ENCODE measurements at regions of chr15 and their contacts with region 1.

Region 1: GRCh38 chr15:25933456-25934158 is 70.5 kb upstream of the ATP10A start:
- DNase-seq: peak; percentile 57
- H3K4me3 ChIP-seq: peak overlapping the region; percentile 42
- CTCF ChIP-seq: peak; percentile 84

Region 2: DNA sequence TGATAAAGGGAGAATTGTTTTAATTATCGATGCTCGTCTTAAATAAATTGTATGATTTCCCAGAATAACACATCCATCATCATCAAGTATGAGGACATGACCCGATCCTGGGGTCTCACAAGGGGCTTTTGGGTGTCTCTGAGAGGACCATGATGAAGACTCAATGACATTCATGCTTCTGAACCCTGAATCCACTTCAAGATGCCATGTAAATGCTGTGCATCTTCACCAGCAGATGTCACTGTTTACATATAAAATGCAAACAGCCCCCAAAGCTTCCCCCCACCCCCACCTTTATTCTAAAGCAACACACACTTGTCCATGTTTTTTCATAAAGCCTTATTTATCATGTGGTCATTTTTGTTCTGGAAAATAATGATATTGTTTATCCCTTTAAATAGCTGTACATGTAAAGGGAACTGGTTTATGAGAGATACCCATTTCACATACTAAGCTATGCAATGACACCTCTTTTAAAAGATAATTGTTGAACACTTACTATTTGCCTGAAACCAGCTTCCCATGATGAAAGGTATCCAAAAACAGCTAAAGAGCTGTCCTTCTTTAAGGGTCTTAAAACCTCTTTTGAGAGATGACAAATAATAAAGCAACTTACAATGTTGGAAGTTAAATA is 425.1 kb before region 1 on chr15:
- CTCF ChIA-PET with region 1: interaction called, 12 read pairs
- POLR2A ChIA-PET with region 1: no interaction called
- DNase-seq: peak; percentile 5
- H3K4me3 ChIP-seq: no peak overlapping the region
- CTCF ChIP-seq: peak; percentile 55

Region 3: DNA sequence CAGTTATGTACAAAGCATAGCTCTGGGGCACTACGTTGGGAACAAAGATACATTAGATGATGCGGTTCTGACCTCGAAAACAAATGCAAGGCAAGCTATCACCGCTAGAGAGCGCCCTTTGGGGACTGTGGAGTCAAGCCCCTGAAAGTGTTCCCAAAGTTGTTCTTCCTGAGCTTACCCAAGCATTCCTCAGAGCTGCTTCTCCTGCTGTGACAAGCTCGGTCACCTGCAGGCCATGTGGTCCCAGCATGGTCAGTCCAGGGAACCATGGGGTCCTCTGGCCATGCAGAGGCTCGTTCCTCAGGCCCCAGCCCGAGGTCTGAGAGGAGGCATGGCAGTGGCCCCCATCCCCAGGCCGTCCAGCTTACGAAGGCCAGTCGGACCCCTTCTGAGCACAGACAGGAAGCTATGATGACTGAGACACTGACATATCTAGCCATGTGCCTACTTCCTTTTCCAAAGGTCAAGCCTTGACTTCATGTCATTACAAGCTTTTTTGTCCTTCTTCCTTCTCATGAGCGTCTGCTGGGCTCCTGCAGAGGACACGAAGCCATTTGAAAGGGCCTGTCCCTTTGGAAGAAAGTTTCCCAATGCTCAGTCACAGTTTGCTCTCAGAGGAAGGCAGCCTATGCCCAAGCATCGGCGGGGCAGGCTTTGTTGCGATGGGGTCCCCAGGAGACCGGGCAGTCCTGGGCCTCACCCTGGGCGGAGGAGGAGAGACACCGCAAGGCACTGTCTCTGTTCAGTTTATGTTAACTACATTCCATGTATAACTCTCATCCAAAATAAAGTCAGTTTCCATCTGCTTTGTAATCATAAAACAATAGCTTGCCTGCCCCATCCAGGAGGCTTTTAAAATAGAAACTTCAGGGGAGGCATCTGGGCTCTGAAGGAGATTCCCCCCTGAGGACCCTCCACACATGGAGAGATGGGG is 149.7 kb before region 1 on chr15:
- CTCF ChIA-PET with region 1: interaction called, 41 read pairs
- POLR2A ChIA-PET with region 1: interaction called, 3 read pairs
- DNase-seq: no peak
- H3K4me3 ChIP-seq: no peak overlapping the region
- CTCF ChIP-seq: peak; percentile 62

Region 4: DNA sequence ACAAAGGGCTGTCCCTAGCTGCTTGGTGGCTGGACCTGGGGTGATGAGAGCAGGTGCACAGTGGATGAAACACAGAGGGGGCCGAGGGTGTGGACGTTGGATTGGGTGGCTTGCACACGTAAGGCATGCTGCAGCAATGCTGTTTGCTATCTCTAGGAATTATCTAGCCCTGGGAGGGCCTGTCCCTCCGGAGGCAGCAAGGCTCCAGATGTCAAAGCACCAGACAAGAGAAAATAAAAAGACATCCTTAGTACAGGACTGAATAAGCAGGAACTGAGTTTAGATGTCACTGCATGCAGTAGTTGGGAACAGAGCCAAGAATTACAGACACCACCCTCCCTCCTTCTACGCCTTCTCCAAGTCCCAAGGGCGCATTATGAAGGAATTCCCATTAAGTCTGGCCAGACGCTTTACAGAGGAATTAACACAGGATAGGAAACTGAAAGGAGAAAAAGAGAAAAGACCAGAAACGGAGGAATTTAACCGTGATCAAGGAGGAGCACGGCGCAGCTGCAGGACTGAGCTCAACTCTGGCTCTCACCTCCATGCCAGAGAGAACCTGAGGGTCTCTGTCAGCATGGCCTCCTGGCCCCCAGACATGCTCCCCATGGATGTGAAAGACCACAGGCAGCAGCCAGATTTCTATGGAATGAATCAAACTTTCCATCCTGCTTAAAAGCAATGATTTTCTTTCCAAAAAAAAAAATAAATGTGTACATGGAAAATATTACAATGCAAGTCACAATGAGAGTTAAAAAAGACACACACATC is 84.3 kb before region 1 on chr15:
- CTCF ChIA-PET with region 1: interaction called, 15 read pairs
- POLR2A ChIA-PET with region 1: interaction called, 3 read pairs
- DNase-seq: peak; percentile 92
- H3K4me3 ChIP-seq: peak overlapping the region; percentile 47
- CTCF ChIP-seq: no peak

Region 5: DNA sequence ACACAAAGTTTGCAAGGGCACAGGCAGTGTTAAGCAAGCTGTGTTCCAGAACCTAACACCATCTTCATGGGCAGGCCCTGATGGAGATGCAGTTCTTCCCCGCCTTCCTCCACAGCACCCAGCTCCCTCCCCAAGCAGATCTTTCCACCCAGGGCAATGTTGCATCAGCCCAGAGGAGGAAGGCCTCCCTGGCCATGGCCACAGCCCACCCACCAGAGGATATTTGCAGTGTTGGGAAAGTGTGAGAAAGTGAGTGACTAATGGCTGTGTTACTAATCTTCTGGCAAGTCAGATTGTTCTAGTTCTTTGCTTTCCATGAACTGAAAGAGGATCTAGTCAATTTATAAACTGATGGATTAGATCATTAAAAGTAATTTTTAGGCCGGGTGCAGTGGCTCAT is 28.5 kb before region 1 on chr15:
- CTCF ChIA-PET with region 1: interaction called, 19 read pairs
- POLR2A ChIA-PET with region 1: no interaction called
- DNase-seq: peak; percentile 68
- H3K4me3 ChIP-seq: no peak overlapping the region
- CTCF ChIP-seq: no peak

Region 6: GRCh38 chr15:25985165-25985564 is 51.6 kb after region 1 on chr15:
- CTCF ChIA-PET with region 1: no interaction called
- POLR2A ChIA-PET with region 1: no interaction called
- DNase-seq: no peak
- H3K4me3 ChIP-seq: no peak overlapping the region
- CTCF ChIP-seq: no peak

Measured in AG04449 (cell line).